ENCODE measurements at regions of chr3 and their contacts with region 1.

Region 1: GRCh38 chr3:42961633-42962032 is 17.5 kb upstream of the GASK1A start:
- DNase-seq: peak; percentile 32 to 60 (median 50)
- H3K4me3 ChIP-seq: no peak overlapping the region
- H3K27ac ChIP-seq: no peak overlapping the region
- H3K4me1 ChIP-seq: no peaks in the 10 kb centered on the region
- H3K27me3 ChIP-seq: no peaks in the 10 kb centered on the region

Region 2: DNA sequence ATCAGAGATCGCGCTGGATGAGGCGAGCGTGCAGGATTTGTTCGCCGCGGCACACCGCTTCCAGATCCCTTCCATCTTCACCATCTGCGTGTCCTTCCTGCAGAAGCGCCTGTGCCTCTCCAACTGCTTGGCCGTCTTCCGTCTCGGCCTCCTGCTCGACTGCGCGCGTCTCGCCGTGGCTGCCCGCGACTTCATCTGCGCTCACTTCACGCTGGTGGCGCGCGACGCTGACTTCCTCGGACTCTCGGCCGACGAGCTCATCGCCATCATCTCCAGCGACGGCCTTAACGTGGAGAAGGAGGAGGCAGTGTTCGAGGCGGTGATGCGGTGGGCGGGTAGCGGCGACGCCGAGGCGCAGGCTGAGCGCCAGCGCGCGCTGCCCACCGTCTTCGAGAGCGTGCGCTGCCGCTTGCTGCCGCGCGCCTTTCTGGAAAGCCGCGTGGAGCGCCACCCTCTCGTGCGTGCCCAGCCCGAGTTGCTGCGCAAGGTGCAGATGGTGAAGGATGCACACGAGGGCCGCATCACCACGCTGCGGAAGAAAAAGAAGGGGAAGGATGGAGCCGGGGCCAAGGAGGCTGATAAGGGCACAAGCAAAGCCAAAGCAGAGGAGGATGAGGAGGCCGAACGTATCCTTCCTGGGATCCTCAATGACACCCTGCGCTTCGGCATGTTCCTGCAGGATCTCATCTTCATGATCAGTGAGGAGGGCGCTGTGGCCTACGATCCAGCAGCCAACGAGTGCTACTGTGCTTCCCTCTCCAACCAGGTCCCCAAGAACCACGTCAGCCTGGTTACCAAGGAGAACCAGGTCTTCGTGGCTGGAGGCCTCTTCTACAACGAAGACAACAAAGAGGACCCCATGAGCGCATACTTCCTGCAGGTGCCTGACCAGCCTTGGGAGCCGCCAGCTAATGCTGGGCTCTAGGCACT is 275.5 kb before region 1 on chr3:
- CTCF ChIA-PET with region 1: no interaction called
- POLR2A ChIA-PET with region 1: no interaction called
- DNase-seq: peak in 2 of 3 donors; percentile 15 to 33
- H3K4me3 ChIP-seq: peak overlapping the region in 4 of 7 experiments; percentile 5 to 46 (median 14)
- H3K27ac ChIP-seq: no peak overlapping the region
- H3K4me1 ChIP-seq: peaks cover 0 to 9% (median 3%) of the 10 kb centered on the region in 4 experiments
- H3K27me3 ChIP-seq: peaks cover 0 to 59% (median 9%) of the 10 kb centered on the region in 5 experiments

Region 3: GRCh38 chr3:43087249-43087776 is 125.7 kb after region 1 on chr3:
- CTCF ChIA-PET with region 1: interaction called, 15 read pairs
- POLR2A ChIA-PET with region 1: no interaction called
- DNase-seq: no peak
- H3K4me3 ChIP-seq: no peak overlapping the region
- H3K27ac ChIP-seq: no peak overlapping the region
- H3K4me1 ChIP-seq: no peaks in the 10 kb centered on the region
- H3K27me3 ChIP-seq: no peaks in the 10 kb centered on the region

Region 4: GRCh38 chr3:43426388-43426787 is 464.8 kb after region 1 on chr3:
- CTCF ChIA-PET with region 1: no interaction called
- POLR2A ChIA-PET with region 1: no interaction called
- DNase-seq: no peak
- H3K4me3 ChIP-seq: no peak overlapping the region
- H3K27ac ChIP-seq: no peak overlapping the region
- H3K4me1 ChIP-seq: no peaks in the 10 kb centered on the region
- H3K27me3 ChIP-seq: no peaks in the 10 kb centered on the region

Measured in common myeloid progenitor, CD34-positive (primary cell).